T-cell (primary cell): ENCODE measurements at regions of chr6 and their contacts with region 1.

Region 1: DNA sequence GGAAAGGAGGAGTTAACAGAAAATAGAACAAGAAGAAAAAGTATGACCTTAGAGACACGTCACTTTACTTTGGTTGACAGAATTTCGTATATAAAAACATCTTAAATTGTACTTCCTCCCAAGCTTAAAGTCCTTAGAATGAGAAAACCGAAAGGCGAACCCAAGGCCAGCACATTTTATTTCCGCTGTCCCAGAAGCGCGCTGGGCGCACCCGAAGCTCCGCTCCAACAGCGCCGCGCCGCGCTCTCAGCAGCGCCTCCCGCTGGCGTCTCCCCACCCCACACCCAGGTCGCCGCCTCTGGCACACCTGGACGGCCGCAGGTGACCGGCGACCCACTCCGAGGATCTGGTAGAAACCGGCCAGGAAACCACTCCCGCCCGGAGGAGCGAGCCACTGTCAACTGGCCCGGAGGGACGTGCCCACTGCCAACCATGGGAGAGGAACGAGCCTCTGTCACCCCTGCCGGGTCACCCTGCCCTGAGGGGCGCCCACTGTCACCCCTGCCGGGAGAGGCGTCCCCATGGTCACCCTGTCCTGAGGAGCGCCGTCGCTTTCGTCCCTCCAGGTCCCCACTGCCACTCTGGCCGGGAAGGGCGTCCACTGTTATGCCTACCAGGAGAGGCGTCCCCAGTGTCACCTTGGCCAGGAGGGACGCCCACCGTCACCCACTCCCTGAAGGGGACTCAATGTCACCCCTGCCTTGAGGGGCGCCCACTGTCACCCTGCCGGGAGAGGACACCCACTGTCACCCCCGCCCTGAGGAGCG is 824 bp downstream of the MPC1 start:
- DNase-seq: peak in 34 of 35 experiments; percentile 33 to 79 (median 52)
- ATAC-seq: peak; percentile 29 to 35 (median 30)
- H3K4me3 ChIP-seq: peak overlapping the region; percentile 59 to 84
- H3K4me3 Mint-ChIP-seq: peak overlapping the region; percentile 91 to 95 (median 92)
- H3K27ac ChIP-seq: no peak overlapping the region
- H3K27ac Mint-ChIP-seq: peak overlapping the region; percentile 59 to 78
- H3K4me1 ChIP-seq: peaks cover 11 to 14% of the 10 kb centered on the region in 2 experiments
- H3K4me1 Mint-ChIP-seq: peaks cover 10 to 18% (median 15%) of the 10 kb centered on the region in 3 donors
- H3K27me3 ChIP-seq: no peaks in the 10 kb centered on the region
- H3K27me3 Mint-ChIP-seq: no peaks in the 10 kb centered on the region

Region 2: DNA sequence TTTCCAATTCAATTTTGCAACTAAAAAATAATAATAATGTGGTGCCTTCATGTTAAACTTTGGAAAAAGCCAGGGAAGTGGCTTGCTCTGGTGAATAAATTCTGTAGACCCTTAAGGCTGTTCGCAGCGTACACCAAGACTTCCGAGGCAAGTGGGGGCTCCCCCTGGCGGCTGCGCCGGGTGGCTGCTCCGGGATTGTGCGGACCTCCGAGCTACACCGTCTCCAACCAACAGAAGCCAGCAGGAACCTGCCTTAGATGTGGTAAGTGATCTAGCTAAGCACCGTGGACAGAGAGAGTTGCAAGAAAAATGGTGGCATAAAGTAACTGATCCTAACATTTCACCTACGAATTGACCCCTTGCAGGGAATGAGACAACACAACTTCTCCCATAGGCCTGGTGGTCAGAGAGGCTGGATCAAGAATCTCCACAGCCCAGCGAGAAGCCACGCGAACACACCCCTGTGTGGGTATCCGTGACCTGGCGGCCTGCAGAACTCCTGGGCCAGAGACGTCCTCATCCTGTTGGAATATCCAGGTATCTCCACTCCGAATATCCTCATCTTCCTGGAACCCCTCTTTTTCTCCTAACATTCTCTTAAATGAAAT is 283.9 kb before region 1 on chr6:
- CTCF ChIA-PET with region 1: interaction called in 1 of 2 experiments, 11 read pairs
- POLR2A ChIA-PET with region 1: no interaction called
- DNase-seq: peak in 21 of 35 experiments; percentile 3 to 44 (median 22)
- ATAC-seq: peak in 3 of 4 experiments; percentile 35 to 64 (median 54)
- H3K4me3 ChIP-seq: peak overlapping the region in 1 of 2 donors; percentile 66
- H3K4me3 Mint-ChIP-seq: peak overlapping the region in 1 of 3 donors; percentile 16
- H3K27ac ChIP-seq: no peak overlapping the region
- H3K27ac Mint-ChIP-seq: no peak overlapping the region
- H3K4me1 ChIP-seq: no peaks in the 10 kb centered on the region
- H3K4me1 Mint-ChIP-seq: peaks cover 0 to 2% (median 0%) of the 10 kb centered on the region in 3 donors
- H3K27me3 ChIP-seq: peaks cover 7 to 17% of the 10 kb centered on the region in 2 experiments
- H3K27me3 Mint-ChIP-seq: peaks cover 36 to 41% of the 10 kb centered on the region in 2 donors

Region 3: DNA sequence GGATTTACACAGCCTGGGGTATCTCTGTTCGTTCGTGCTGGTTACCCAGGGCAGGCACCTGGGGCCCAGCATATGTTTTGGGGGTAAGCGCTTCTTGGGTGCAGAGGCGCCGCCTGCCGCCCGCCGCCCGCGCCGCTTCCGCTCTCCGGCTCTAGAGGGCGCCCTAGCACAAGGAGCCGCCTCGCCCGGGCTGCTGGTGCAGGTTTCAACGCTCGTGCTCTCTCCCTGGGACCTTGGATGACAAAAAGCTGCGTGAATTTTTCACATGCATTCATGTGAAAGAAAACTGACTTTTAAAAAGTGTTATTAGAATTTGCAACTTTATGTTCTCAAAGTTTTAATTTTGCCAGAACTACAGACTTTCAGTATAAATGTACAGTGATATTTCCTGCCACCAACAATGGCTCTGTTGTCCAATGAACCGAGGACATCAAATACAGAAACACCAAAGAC is 106.2 kb before region 1 on chr6:
- CTCF ChIA-PET with region 1: interaction called, 6 to 13 read pairs
- POLR2A ChIA-PET with region 1: no interaction called
- DNase-seq: peak; percentile 37 to 85 (median 70)
- ATAC-seq: peak; percentile 88 to 95 (median 94)
- H3K4me3 ChIP-seq: no peak overlapping the region
- H3K4me3 Mint-ChIP-seq: no peak overlapping the region
- H3K27ac ChIP-seq: no peak overlapping the region
- H3K27ac Mint-ChIP-seq: peak overlapping the region in 1 of 2 donors; percentile 43
- H3K4me1 ChIP-seq: peaks cover 0 to 4% of the 10 kb centered on the region in 2 experiments
- H3K4me1 Mint-ChIP-seq: peaks cover 0 to 8% (median 2%) of the 10 kb centered on the region in 3 donors
- H3K27me3 ChIP-seq: peaks cover 0 to 12% of the 10 kb centered on the region in 2 experiments
- H3K27me3 Mint-ChIP-seq: peaks cover 0 to 1% of the 10 kb centered on the region in 2 donors

Region 4: GRCh38 chr6:166313255-166314070 is 68.5 kb before region 1 on chr6:
- CTCF ChIA-PET with region 1: interaction called, 11 to 19 read pairs
- POLR2A ChIA-PET with region 1: no interaction called
- DNase-seq: peak in 28 of 35 experiments; percentile 12 to 75 (median 48)
- ATAC-seq: peak; percentile 49 to 85 (median 68)
- H3K4me3 ChIP-seq: no peak overlapping the region
- H3K4me3 Mint-ChIP-seq: no peak overlapping the region
- H3K27ac ChIP-seq: no peak overlapping the region
- H3K27ac Mint-ChIP-seq: no peak overlapping the region
- H3K4me1 ChIP-seq: peaks cover 0 to 2% of the 10 kb centered on the region in 2 experiments
- H3K4me1 Mint-ChIP-seq: peaks cover 0 to 4% (median 2%) of the 10 kb centered on the region in 3 donors
- H3K27me3 ChIP-seq: peaks cover 4 to 17% of the 10 kb centered on the region in 2 experiments
- H3K27me3 Mint-ChIP-seq: peaks cover 16 to 19% of the 10 kb centered on the region in 2 donors

Region 5: GRCh38 chr6:166499350-166500163 is 117.6 kb after region 1 on chr6:
- CTCF ChIA-PET with region 1: no interaction called
- POLR2A ChIA-PET with region 1: no interaction called
- DNase-seq: no peak
- ATAC-seq: no peak
- H3K4me3 ChIP-seq: no peak overlapping the region
- H3K4me3 Mint-ChIP-seq: no peak overlapping the region
- H3K27ac ChIP-seq: no peak overlapping the region
- H3K27ac Mint-ChIP-seq: peak overlapping the region in 1 of 2 donors; percentile 5
- H3K4me1 ChIP-seq: peaks cover 0 to 8% of the 10 kb centered on the region in 2 experiments
- H3K4me1 Mint-ChIP-seq: peaks cover 0 to 8% (median 5%) of the 10 kb centered on the region in 3 donors
- H3K27me3 ChIP-seq: peaks cover 0 to 8% of the 10 kb centered on the region in 2 experiments
- H3K27me3 Mint-ChIP-seq: no peaks in the 10 kb centered on the region